ENCODE measurements at regions of chr17 and their contacts with region 1.

Region 1: DNA sequence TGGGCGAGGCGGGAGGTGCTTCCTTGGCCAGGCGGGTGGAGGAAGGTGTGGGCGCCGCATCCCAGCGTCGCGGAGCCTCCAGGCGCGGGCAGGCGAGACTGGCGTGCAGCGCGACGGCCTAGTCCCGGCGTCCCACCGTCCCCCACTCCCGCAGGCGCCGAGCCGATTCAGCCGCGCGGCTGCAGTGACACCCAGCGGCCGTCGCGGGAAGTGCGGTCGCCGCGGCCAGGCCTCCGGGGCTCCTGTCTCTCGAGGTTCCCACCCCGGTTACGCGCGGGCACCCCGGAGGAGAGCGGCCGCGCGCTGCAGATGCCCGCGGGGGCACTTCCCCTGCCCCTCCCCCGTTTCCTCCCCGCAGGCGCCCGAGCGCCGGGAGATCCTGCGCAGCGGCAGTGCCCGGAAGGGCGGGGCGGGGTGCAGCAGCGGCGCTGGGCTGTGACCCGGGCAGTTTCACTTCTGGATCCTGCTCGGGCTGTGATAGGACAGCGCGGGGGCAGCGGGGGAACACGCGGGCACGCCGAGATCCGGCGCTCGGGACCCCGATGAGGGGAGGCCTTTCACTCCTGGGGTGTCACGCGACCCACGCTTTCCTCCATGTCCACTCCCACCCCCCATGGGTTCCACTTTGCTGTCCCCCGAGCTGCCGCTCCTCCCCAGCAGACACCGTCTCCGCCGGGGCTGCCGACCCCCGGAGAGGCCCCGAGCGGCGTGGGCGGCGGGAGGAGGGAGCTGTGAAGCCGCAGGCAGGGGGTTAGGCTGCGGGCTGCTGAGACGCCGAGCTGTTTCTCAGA is 16.6 kb downstream of the GRB7 start:
- DNase-seq: peak; percentile 98
- ATAC-seq: peak; percentile 86
- H3K4me3 Mint-ChIP-seq: peak overlapping the region; percentile 77
- H3K27ac Mint-ChIP-seq: peak overlapping the region; percentile 76
- H3K4me1 Mint-ChIP-seq: peaks cover 61% of the 10 kb centered on the region
- H3K27me3 Mint-ChIP-seq: no peaks in the 10 kb centered on the region

Region 2: DNA sequence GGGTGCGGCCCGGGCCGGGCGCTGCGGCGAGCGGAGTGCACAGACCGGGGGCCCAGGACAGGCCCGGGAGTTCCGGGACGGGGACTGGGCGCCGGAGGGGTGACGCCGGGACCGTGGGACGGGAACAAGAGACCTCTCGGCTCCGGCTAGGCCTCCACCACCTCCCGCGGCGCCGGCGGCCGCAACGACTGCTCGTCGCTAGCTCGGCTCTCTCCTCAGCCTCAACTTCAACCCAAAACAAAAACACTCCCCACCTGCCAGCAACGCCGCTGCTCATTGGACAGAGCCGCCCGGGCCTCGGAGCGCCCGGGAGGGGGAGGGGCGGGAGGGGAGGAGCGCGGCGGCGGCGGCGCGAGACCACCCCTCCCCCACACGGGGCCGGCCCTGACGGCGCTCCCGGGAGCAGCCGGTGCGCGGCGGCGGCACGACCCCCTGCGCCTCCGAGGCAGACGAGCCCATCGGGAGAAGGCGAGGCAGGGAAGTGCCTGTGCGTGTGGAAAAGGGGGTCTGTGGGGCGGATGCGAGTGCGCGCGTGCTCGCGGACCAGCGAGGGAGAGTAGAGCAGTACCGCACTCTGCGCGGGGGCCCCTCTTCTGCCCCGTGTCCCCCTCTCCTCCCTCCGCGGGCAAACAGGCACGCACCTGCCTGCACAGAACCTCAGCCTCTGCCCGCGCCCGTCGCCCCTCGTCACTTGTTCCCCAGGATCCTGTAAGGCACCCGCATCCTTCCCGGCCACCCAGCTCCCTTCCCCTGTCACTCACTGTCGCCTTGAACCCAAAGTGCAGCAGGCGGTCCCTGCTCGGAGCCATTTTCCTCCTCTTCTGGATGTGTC is 352.7 kb before region 1 on chr17 and contains the start of gene FBXL20:
- CTCF ChIA-PET with region 1: no interaction called
- POLR2A ChIA-PET with region 1: no interaction called
- intact Hi-C with region 1: loop called in 1 of 2 experiments (anchors 1 kb)
- DNase-seq: peak; percentile 97
- ATAC-seq: peak; percentile 63
- H3K4me3 Mint-ChIP-seq: peak within 1 kb of the TSS; percentile 91
- H3K27ac Mint-ChIP-seq: peak within 1 kb of the TSS; percentile 92
- H3K4me1 Mint-ChIP-seq: peaks cover 48% of the 10 kb centered on the region
- H3K27me3 Mint-ChIP-seq: no peaks in the 10 kb centered on the region
- total RNA-seq, gene FBXL20: 16.9 to 18.9 TPM

Region 3: DNA sequence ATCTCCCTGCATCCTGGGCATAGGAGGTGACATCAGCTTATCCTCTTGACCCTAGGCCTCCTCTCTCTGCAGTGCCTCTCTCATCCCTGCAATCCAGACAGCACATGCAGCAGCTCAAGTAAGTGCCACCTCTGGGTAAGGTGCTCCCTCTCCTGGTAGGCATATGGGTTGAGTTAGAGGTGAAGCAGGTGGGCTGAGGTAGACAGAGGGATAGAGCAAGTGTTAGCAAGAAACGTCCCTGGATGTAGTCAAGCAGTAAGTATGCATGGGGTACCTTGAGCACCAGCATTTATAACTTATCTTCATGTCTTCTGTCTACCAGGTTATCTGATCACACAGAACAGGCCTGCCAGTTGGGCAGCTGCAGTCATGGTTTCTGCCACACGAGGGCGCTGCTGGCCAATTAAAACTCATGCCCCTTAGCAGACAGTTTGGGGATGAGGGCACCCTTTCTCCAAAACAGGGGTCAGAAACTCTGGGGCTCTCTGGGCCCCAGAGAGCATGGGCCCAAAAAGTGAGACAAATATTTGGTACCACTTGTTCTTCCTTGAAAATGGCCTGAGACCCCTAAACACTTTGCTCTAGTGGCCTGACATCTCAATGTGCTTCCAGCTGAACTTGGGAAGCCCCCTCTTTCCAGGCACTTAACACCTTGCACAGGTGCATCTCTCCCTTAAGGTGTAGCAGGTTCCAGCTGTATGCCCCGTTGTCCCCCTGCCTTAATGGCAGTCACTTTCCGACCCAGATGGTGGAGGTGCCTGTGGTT is 206.5 kb before region 1 on chr17:
- CTCF ChIA-PET with region 1: no interaction called
- POLR2A ChIA-PET with region 1: no interaction called
- intact Hi-C with region 1: loop called in 1 of 2 experiments (anchors 1 kb)
- DNase-seq: peak; percentile 86
- ATAC-seq: peak; percentile 90
- H3K4me3 Mint-ChIP-seq: no peak overlapping the region
- H3K27ac Mint-ChIP-seq: no peak overlapping the region
- H3K4me1 Mint-ChIP-seq: no peaks in the 10 kb centered on the region
- H3K27me3 Mint-ChIP-seq: no peaks in the 10 kb centered on the region

Region 4: DNA sequence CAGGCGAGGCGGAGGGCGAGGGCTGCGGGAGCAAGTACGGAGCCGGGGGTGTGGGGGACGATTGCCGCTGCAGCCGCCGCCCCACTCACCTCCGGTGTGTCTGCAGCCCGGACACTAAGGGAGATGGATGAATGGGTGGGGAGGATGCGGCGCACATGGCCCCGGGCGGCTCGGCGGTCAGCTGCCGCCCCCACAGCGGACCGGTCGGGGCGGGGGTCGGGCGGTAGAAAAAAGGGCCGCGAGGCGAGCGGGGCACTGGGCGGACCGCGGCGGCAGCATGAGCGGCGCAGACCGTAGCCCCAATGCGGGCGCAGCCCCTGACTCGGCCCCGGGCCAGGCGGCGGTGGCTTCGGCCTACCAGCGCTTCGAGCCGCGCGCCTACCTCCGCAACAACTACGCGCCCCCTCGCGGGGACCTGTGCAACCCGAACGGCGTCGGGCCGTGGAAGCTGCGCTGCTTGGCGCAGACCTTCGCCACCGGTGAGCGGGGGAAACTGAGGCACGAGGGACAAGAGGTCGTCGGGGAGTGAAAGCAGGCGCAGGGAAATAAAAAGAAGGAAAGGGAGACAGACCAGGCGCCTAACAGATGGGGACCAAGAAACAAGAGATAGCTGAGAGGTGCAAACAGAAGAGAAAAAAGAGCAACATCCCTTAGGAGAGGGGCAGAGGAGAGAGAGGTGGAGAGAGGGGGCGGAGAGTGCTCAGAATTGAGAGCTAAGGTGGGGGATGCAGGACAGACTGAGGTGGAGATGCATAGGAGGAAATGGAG is 86.0 kb before region 1 on chr17 and contains the start of gene PNMT:
- CTCF ChIA-PET with region 1: interaction called, 3 read pairs
- POLR2A ChIA-PET with region 1: no interaction called
- intact Hi-C with region 1: loop called in 1 of 2 experiments (anchors 1 kb)
- DNase-seq: peak; percentile 87
- ATAC-seq: peak; percentile 79
- H3K4me3 Mint-ChIP-seq: peak within 1 kb of the TSS; percentile 50
- H3K27ac Mint-ChIP-seq: no peak within 1 kb of the TSS
- H3K4me1 Mint-ChIP-seq: peaks cover 10% of the 10 kb centered on the region
- H3K27me3 Mint-ChIP-seq: peaks cover 13% of the 10 kb centered on the region
- total RNA-seq, gene PNMT: not detected

Region 5: GRCh38 chr17:39704821-39705551 is 49.4 kb before region 1 on chr17:
- CTCF ChIA-PET with region 1: no interaction called
- POLR2A ChIA-PET with region 1: no interaction called
- intact Hi-C with region 1: no loop called
- DNase-seq: no peak
- ATAC-seq: no peak
- H3K4me3 Mint-ChIP-seq: no peak overlapping the region
- H3K27ac Mint-ChIP-seq: no peak overlapping the region
- H3K4me1 Mint-ChIP-seq: peaks cover 10% of the 10 kb centered on the region
- H3K27me3 Mint-ChIP-seq: peaks cover 13% of the 10 kb centered on the region

Region 6: DNA sequence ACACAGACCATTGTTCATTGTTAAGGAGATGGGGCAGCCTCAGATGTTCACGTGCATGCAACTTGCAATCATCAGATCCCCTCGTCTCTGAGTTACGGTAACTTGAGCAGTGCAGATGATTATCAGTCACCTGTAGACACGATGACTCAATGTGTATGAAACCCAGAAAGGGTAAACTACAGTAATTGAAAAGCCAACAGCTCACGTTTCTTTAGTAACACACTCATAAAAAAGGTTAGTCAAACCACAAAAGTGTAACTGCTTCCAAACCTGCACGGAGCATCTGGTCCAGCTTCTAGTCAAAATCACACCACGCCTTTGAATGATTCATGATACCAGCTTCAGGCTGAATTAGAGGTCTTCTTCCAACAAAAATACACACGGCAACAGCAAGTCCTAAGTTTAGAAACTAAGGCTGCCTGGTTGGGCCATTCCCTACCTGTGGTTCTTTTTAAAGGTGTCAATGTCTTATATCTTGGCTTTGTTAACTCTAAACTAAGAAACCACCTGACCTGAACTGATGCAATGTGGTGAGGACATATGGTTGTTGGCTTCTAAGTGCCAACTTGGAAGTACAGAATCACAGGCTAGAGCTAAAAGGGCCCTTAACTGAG is 15.7 kb after region 1 on chr17:
- CTCF ChIA-PET with region 1: interaction called, 9 read pairs
- POLR2A ChIA-PET with region 1: interaction called, 27 read pairs
- intact Hi-C with region 1: loop called (anchors 1 kb)
- DNase-seq: peak; percentile 78
- ATAC-seq: peak; percentile 80
- H3K4me3 Mint-ChIP-seq: peak overlapping the region; percentile 7
- H3K27ac Mint-ChIP-seq: peak overlapping the region; percentile 82
- H3K4me1 Mint-ChIP-seq: peaks cover 96% of the 10 kb centered on the region
- H3K27me3 Mint-ChIP-seq: no peaks in the 10 kb centered on the region

Region 7: GRCh38 chr17:39863918-39864746 is 109.8 kb after region 1 on chr17 and contains the start of gene IKZF3:
- CTCF ChIA-PET with region 1: interaction called, 6 read pairs
- POLR2A ChIA-PET with region 1: interaction called, 3 read pairs
- intact Hi-C with region 1: loop called (anchors 1 kb)
- DNase-seq: peak; percentile 93
- ATAC-seq: peak; percentile 75
- H3K4me3 Mint-ChIP-seq: peak within 1 kb of the TSS; percentile 98
- H3K27ac Mint-ChIP-seq: peak within 1 kb of the TSS; percentile 97
- H3K4me1 Mint-ChIP-seq: peaks cover 67% of the 10 kb centered on the region
- H3K27me3 Mint-ChIP-seq: no peaks in the 10 kb centered on the region
- total RNA-seq, gene IKZF3: 37.6 to 50.4 TPM

Measured in activated CD4-positive, alpha-beta T cell treated with anti-CD3 and anti-CD28 coated beads for 36 hours (primary cell).